Left colon (tissue), 2 donors: ENCODE measurements at regions of chr1 and their contacts with region 1.

Region 1: GRCh38 chr1:85678193-85678592 is 30.0 kb downstream of the ZNHIT6 start:
- DNase-seq: no peak
- ATAC-seq: no peak

Region 2: DNA sequence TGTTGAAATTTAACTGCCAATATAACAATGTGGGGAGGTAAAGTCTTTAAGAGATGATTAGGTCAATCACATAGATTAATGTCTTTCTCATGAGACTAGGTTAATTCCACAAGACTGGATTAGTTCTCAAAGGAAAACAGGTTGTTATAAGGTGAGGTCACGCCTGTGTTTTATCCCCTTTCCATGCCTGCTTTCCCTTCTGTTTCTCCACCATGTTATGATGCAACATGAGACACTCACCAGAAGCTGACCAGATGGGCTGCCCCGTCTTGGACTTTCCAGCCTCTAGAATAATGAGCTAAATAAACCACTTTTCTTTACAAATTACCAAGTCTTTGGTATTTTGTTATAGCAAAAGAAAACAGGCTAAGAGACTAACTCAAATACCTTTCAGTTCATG is 284.1 kb before region 1 on chr1:
- intact Hi-C with region 1: no loop called
- DNase-seq: no peak
- ATAC-seq: no peak

Region 3: GRCh38 chr1:85502625-85503083 is 175.5 kb before region 1 on chr1:
- intact Hi-C with region 1: loop called in 1 of 2 experiments (anchors 10 kb)
- DNase-seq: peak; percentile 38 to 57
- ATAC-seq: peak; percentile 92

Region 4: DNA sequence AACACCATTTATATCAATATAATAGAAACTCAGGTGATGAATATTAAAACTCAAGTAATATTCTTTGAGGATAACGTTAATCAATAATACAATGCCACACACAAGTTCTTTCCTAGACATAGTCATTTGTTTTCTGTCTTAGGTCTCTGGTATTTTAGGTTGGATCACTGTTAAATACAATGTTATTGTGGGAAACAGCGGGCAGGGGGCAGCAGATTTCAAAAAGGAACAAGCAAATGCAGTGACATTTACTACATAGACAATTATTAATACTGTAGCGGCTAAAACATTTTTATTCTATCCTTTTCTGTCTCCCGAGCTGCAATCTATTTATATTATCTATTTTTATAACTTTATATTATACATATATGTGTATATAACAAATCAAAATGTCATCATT is 216.5 kb after region 1 on chr1:
- intact Hi-C with region 1: no loop called
- DNase-seq: peak in 1 of 2 donors; percentile 11
- ATAC-seq: no peak